ENCODE measurements at regions of chr13 and their contacts with region 1.

Region 1: DNA sequence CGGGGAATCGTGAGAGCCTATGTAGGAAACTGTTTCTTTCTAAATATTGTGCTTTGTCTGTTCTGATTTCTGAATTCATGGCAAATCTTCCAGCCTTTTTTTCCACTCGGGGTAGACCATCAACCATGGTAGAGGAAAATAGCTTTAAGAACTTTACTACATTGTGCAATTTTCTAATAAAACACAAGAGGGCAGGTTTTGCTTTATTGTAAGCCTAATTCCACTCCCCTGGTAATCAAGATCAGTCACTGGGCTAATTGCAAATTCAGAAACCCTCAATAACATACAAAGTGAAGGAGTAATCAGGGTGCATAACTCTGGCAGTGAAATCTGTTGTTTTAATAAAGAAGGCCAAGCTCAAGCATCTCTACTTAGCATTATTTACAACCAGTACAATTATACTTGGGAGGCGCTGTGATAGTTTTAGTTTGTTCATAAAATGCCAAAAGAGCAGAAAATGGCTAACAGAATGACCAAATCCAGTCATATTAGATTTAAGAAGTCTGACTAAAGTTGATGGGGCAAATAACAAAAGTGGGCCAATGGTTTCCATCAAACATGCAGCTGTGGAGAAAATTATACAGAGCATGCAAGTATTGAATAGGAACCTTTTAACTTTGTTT is 43.8 kb downstream of the DCT start:
- DNase-seq: no peak
- H3K4me3 ChIP-seq: no peak overlapping the region
- H3K27ac ChIP-seq: no peak overlapping the region
- H3K4me1 ChIP-seq: no peaks in the 10 kb centered on the region
- H3K27me3 ChIP-seq: no peaks in the 10 kb centered on the region
- CTCF ChIP-seq: peak; percentile 42 to 69 (median 62)
- POLR2A ChIP-seq: no peak

Region 2: DNA sequence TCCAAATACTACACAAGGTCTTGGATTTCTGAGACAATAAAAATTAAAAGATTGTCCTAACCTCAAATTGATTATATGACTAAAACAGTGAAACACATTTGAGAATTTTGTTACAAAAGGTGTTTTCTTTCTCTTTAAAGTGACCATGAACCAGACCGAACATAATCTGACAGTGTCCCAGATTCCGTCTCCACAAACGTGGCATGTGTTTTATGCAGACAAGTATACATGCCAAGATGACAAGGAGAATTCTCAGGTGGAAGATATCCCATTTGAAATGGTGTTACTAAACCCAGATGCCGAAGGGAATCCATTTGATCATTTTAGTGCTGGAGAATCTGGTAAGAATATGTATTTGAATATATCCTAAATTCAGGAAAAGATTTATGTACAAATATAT is 176.3 kb after region 1 on chr13:
- intact Hi-C with region 1: loop called (anchors 5 kb)
- DNase-seq: no peak
- H3K4me3 ChIP-seq: no peak overlapping the region
- H3K27ac ChIP-seq: no peak overlapping the region
- H3K4me1 ChIP-seq: peaks cover 0 to 3% of the 10 kb centered on the region in 2 donors
- H3K27me3 ChIP-seq: no peaks in the 10 kb centered on the region
- CTCF ChIP-seq: no peak
- POLR2A ChIP-seq: no peak

Region 3: GRCh38 chr13:94617389-94618000 is 181.8 kb after region 1 on chr13:
- intact Hi-C with region 1: loop called (anchors 5 kb)
- DNase-seq: peak in 3 of 7 donors; percentile 10 to 32 (median 24)
- H3K4me3 ChIP-seq: no peak overlapping the region
- H3K27ac ChIP-seq: no peak overlapping the region
- H3K4me1 ChIP-seq: no peaks in the 10 kb centered on the region
- H3K27me3 ChIP-seq: no peaks in the 10 kb centered on the region
- CTCF ChIP-seq: peak; percentile 49 to 77 (median 68)
- POLR2A ChIP-seq: no peak

Measured in adrenal gland (tissue), 19 donors.